Mammary epithelial cell (primary cell): ENCODE measurements at regions of chr4 and their contacts with region 1.

Region 1: GRCh38 chr4:82618103-82618720 is 56.4 kb upstream of the TMEM150C start:
- DNase-seq: no peak
- H3K4me3 ChIP-seq: no peak overlapping the region
- H3K27ac ChIP-seq: no peak overlapping the region
- H3K4me1 ChIP-seq: no peaks in the 10 kb centered on the region
- H3K27me3 ChIP-seq: peaks cover 2% of the 10 kb centered on the region
- CTCF ChIP-seq: no peak

Region 2: GRCh38 chr4:82525395-82525831 is 92.8 kb before region 1 on chr4:
- CTCF ChIA-PET with region 1: no interaction called
- dilution Hi-C with region 1: loop called (anchors 5 kb)
- in situ Hi-C with region 1: no loop called
- intact Hi-C with region 1: no loop called
- DNase-seq: no peak
- H3K4me3 ChIP-seq: no peak overlapping the region
- H3K27ac ChIP-seq: no peak overlapping the region
- H3K4me1 ChIP-seq: no peaks in the 10 kb centered on the region
- H3K27me3 ChIP-seq: no peaks in the 10 kb centered on the region
- CTCF ChIP-seq: no peak

Region 3: DNA sequence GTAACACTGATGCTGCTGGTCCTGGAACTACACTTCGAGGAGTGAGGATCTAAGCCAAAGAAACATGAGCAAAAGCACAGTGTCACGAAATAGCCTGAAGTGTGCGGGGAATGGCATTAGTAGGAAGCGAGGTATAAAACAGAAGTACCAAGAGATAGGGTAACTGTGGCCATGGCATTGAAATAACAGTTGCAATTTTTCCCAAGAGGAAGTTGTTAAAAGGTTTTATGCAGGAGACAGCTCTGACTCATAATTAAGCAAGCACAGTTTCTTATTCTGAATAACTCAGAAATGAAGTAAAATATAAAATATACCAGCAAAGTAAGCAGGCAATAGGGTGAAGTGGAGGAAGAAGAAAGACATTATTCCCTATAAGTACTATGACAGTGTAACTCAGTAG is 33.9 kb after region 1 on chr4:
- CTCF ChIA-PET with region 1: interaction called, 10 read pairs
- dilution Hi-C with region 1: loop called (anchors 5 kb)
- in situ Hi-C with region 1: no loop called
- intact Hi-C with region 1: no loop called
- DNase-seq: no peak
- H3K4me3 ChIP-seq: no peak overlapping the region
- H3K27ac ChIP-seq: no peak overlapping the region
- H3K4me1 ChIP-seq: no peaks in the 10 kb centered on the region
- H3K27me3 ChIP-seq: no peaks in the 10 kb centered on the region
- CTCF ChIP-seq: no peak

Region 4: GRCh38 chr4:82780751-82781231 is 162.6 kb after region 1 on chr4:
- CTCF ChIA-PET with region 1: no interaction called
- dilution Hi-C with region 1: no loop called
- in situ Hi-C with region 1: no loop called
- intact Hi-C with region 1: no loop called
- DNase-seq: no peak
- H3K4me3 ChIP-seq: no peak overlapping the region
- H3K27ac ChIP-seq: no peak overlapping the region
- H3K4me1 ChIP-seq: peaks cover 42% of the 10 kb centered on the region
- H3K27me3 ChIP-seq: no peaks in the 10 kb centered on the region
- CTCF ChIP-seq: no peak